Heart right ventricle (tissue), 16 donors: ENCODE measurements at regions of chr5 and their contacts with region 1.

Region 1: DNA sequence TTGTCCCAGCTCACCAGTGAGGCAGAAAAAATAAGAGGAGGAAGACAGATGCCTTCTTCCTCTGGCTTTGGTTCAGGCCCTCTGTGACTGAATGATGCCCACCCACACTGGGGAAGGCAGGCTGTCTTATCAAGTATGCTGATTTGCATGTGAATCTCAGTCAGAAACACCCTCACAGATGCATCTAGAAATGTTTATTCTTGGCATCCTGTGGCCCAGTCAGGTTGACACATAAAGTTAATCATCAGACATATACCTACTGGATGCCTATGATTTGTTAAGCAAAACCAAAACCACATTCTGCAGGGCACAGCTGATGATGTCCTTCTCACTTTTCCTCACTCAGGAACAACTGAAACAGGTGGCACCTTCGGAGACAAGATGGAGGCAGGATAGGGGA is 243.4 kb upstream of the KCNN2 start:
- DNase-seq: no peak
- ATAC-seq: no peak
- H3K4me3 ChIP-seq: no peak overlapping the region
- H3K27ac ChIP-seq: no peak overlapping the region
- H3K4me1 ChIP-seq: peaks cover 0 to 6% (median 0%) of the 10 kb centered on the region in 9 donors
- H3K27me3 ChIP-seq: no peaks in the 10 kb centered on the region
- CTCF ChIP-seq: no peak

Region 2: GRCh38 chr5:114201332-114201731 is 82.8 kb after region 1 on chr5:
- intact Hi-C with region 1: loop called in 1 of 10 experiments (anchors 10 kb)
- DNase-seq: no peak
- ATAC-seq: no peak
- H3K4me3 ChIP-seq: no peak overlapping the region
- H3K27ac ChIP-seq: no peak overlapping the region
- H3K4me1 ChIP-seq: no peaks in the 10 kb centered on the region
- H3K27me3 ChIP-seq: no peaks in the 10 kb centered on the region
- CTCF ChIP-seq: no peak

Region 3: GRCh38 chr5:114223866-114224265 is 105.4 kb after region 1 on chr5:
- intact Hi-C with region 1: loop called in 1 of 10 experiments (anchors 10 kb)
- DNase-seq: no peak
- ATAC-seq: no peak
- H3K4me3 ChIP-seq: no peak overlapping the region
- H3K27ac ChIP-seq: no peak overlapping the region
- H3K4me1 ChIP-seq: no peaks in the 10 kb centered on the region
- H3K27me3 ChIP-seq: no peaks in the 10 kb centered on the region
- CTCF ChIP-seq: peak in 8 of 9 donors; percentile 22 to 54 (median 38)